H1 (cell line): ENCODE measurements at regions of chr17 and their contacts with region 1.

Region 1: GRCh38 chr17:42779936-42780850 is at the start of gene WNK4:
- DNase-seq: peak in 1 of 2 experiments; percentile 73
- H3K4me3 ChIP-seq: peak within 1 kb of the TSS; percentile 38 to 76 (median 54)
- H3K27ac ChIP-seq: no peak within 1 kb of the TSS
- H3K4me1 ChIP-seq: peaks cover 0 to 14% (median 8%) of the 10 kb centered on the region in 4 experiments; a peak in 6 of 7 replicates
- H3K27me3 ChIP-seq: peaks cover 6 to 23% (median 19%) of the 10 kb centered on the region in 4 experiments
- CTCF ChIP-seq: no peak
- EP300 ChIP-seq: no peak
- POLR2A ChIP-seq: peak in 1 of 2 experiments; percentile 77; a peak in 2 of 3 replicates
- RAD21 ChIP-seq: no peak
- total RNA-seq, gene WNK4: 1.2 and 1.7 TPM in 2 replicates

Region 2: GRCh38 chr17:42798383-42799380 is 18.5 kb after region 1 on chr17 and contains the starts of genes CNTD1 and COA3:
- CTCF ChIA-PET with region 1: interaction called, 4 read pairs
- POLR2A ChIA-PET with region 1: interaction called, 17 read pairs
- DNase-seq: peak; percentile 56 to 93
- H3K4me3 ChIP-seq: peak within 1 kb of the TSS; percentile 90 to 100 (median 98)
- H3K27ac ChIP-seq: peak within 1 kb of the TSS; percentile 67
- H3K4me1 ChIP-seq: peaks cover 3 to 5% (median 4%) of the 10 kb centered on the region in 4 experiments; a peak in 6 of 7 replicates
- H3K27me3 ChIP-seq: peaks cover 0 to 15% (median 11%) of the 10 kb centered on the region in 4 experiments; a peak in 6 of 7 replicates
- CTCF ChIP-seq: no peak
- EP300 ChIP-seq: no peak
- POLR2A ChIP-seq: peak in 1 of 2 experiments; percentile 74; a peak in 2 of 3 replicates
- RAD21 ChIP-seq: no peak
- total RNA-seq, gene CNTD1: not detected in 2 replicates
- total RNA-seq, gene COA3: 68.4 and 71.2 TPM in 2 replicates